ENCODE measurements at regions of chr2 and their contacts with region 1.

Region 1: DNA sequence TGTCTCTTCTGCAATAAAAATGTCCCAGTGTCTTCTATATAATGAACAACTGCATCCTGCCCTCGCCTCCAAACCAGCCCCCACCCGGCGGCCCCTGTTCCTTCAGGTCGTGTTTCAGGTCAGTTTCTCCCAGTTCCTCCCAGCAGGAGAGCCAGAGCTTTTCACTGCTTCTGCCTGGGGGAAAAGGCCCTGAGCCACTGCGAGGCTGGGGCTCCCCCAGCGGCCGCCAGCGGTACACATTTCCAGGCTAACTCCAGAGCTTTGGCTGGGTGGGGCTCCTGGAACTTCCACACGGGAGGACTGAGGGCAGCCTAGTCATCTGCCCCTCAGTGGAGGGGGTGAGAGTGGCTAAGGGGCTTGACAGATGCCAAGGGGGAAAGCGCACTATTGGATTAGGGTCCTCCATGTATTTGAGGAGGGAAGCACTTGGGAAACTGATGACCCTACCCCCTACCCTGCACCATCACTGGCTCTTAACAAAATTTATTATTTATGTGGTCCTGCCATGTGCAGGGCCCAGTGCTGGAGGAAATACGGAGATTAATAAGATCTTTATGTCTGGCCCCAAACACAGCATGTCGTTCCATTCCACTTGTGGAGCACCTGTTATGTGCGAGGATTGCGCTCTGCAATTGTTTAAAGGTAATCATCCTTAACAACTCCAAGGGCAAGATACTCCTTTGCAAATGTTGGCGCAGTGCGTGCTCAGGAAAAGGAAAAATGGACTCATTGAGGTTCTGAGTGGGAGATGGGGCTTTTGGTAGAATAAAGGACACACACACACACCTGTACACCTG is 17.3 kb upstream of the CYS1 start:
- DNase-seq: peak in 1 of 2 experiments; percentile 84
- H3K4me3 ChIP-seq: no peak overlapping the region
- H3K27ac ChIP-seq: no peak overlapping the region
- H3K4me1 ChIP-seq: peaks cover 0 to 4% (median 1%) of the 10 kb centered on the region in 4 experiments; a peak in 2 of 7 replicates
- H3K27me3 ChIP-seq: no peaks in the 10 kb centered on the region
- CTCF ChIP-seq: peak; percentile 82 to 96 (median 92)
- EP300 ChIP-seq: no peak; a peak in 1 of 3 replicates
- POLR2A ChIP-seq: no peak
- RAD21 ChIP-seq: peak; percentile 83 to 87

Region 2: GRCh38 chr2:9555297-9556141 is 542.0 kb before region 1 on chr2 and contains the start of gene ADAM17:
- CTCF ChIA-PET with region 1: no interaction called
- POLR2A ChIA-PET with region 1: no interaction called
- DNase-seq: peak; percentile 82 to 91
- H3K4me3 ChIP-seq: peak within 1 kb of the TSS; percentile 74 to 92 (median 86)
- H3K27ac ChIP-seq: peak within 1 kb of the TSS; percentile 87
- H3K4me1 ChIP-seq: peaks cover 0 to 3% (median 0%) of the 10 kb centered on the region in 4 experiments; a peak in 1 of 7 replicates
- H3K27me3 ChIP-seq: no peaks in the 10 kb centered on the region
- CTCF ChIP-seq: peak; percentile 33 to 51 (median 40); a peak in 3 of 4 replicates
- EP300 ChIP-seq: no peak
- POLR2A ChIP-seq: peak in 1 of 2 experiments; percentile 87; a peak in 2 of 3 replicates
- RAD21 ChIP-seq: peak; percentile 4 to 13; a peak in 3 of 4 replicates
- total RNA-seq, gene ADAM17: 23.5 and 25.1 TPM in 2 replicates

Region 3: GRCh38 chr2:10057231-10058107 is 40.1 kb before region 1 on chr2:
- CTCF ChIA-PET with region 1: interaction called, 429 read pairs
- POLR2A ChIA-PET with region 1: no interaction called
- DNase-seq: peak; percentile 80 to 85
- H3K4me3 ChIP-seq: peak overlapping the region; percentile 28 to 56 (median 40); a peak in 7 of 8 replicates
- H3K27ac ChIP-seq: no peak overlapping the region
- H3K4me1 ChIP-seq: peaks cover 0 to 16% (median 2%) of the 10 kb centered on the region in 4 experiments; a peak in 3 of 7 replicates
- H3K27me3 ChIP-seq: no peaks in the 10 kb centered on the region
- CTCF ChIP-seq: no peak
- EP300 ChIP-seq: no peak
- POLR2A ChIP-seq: peak in 1 of 2 experiments; percentile 42; a peak in 1 of 3 replicates
- RAD21 ChIP-seq: no peak; a peak in 1 of 4 replicates

Region 4: GRCh38 chr2:10072656-10073480 is 24.7 kb before region 1 on chr2:
- CTCF ChIA-PET with region 1: interaction called, 429 read pairs
- POLR2A ChIA-PET with region 1: interaction called, 4 read pairs
- DNase-seq: peak; percentile 43 to 82
- H3K4me3 ChIP-seq: no peak overlapping the region
- H3K27ac ChIP-seq: no peak overlapping the region
- H3K4me1 ChIP-seq: peaks cover 0 to 12% (median 7%) of the 10 kb centered on the region in 4 experiments; a peak in 2 of 7 replicates
- H3K27me3 ChIP-seq: peaks cover 0 to under 1% (median 0%) of the 10 kb centered on the region in 4 experiments; a peak in 1 of 7 replicates
- CTCF ChIP-seq: peak; percentile 84 to 90 (median 89)
- EP300 ChIP-seq: no peak
- POLR2A ChIP-seq: no peak
- RAD21 ChIP-seq: peak; percentile 76 to 82

Region 5: DNA sequence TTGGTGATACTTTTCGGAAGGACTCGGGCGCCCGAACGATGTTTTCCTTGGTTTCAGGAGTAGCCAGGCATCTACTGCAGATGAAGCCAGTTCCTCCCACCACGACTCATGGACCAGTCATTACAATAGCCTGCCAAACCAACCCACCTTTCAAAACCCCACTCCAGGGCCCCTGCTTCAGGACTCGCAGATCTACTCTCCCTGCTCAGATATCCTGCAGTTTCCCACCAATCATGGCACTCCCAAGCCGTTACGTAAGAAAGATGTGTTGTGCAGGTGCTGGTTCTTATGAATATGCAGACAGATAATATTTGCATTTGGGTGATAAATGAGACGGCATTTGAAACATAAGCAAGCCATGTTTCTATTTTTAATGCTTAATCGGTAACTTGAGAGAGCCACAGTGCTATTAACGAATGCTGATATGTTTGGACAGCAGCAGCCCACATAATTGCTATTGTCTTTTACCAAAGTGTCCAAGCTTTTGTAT is 13.8 kb before region 1 on chr2:
- CTCF ChIA-PET with region 1: interaction called, 429 read pairs
- POLR2A ChIA-PET with region 1: interaction called, 5 read pairs
- DNase-seq: no peak
- H3K4me3 ChIP-seq: no peak overlapping the region
- H3K27ac ChIP-seq: no peak overlapping the region
- H3K4me1 ChIP-seq: peaks cover 0 to 6% (median 2%) of the 10 kb centered on the region in 4 experiments; a peak in 2 of 7 replicates
- H3K27me3 ChIP-seq: peaks cover 8 to 24% (median 16%) of the 10 kb centered on the region in 4 experiments
- CTCF ChIP-seq: no peak
- EP300 ChIP-seq: no peak
- POLR2A ChIP-seq: no peak
- RAD21 ChIP-seq: no peak

Region 6: DNA sequence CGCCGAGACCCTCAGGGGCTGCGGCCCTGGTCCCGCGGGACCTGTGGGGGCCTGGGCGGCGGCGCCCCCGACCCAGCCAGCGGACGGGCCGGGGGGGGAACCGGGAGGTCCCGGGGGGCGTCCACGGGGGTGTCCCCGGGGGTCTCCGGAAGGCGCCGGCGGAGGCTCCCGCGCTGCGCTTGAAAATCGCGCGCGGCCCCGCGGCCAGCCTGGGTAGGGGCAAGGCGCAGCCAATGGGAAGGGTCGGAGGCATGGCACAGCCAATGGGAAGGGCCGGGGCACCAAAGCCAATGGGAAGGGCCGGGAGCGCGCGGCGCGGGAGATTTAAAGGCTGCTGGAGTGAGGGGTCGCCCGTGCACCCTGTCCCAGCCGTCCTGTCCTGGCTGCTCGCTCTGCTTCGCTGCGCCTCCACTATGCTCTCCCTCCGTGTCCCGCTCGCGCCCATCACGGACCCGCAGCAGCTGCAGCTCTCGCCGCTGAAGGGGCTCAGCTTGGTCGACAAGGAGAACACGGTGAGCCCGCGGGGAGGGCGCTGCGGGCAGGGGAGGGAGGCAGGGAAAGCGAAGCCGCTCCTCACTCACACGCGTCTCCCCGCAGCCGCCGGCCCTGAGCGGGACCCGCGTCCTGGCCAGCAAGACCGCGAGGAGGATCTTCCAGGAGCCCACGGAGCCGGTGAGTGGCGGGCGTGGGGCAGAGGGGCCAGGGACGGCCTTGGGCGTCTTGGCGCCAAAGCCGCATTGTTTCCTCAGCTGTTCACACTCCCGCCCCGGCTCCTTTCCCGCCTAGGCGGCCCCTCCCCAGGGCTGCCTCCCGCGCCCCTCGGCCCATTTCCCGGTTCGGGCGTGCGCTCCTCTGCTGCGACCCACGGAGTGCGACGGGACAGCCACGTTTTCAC is 25.1 kb after region 1 on chr2 and contains the start of gene RRM2:
- CTCF ChIA-PET with region 1: interaction called, 5 read pairs
- POLR2A ChIA-PET with region 1: interaction called, 14 read pairs
- DNase-seq: peak; percentile 71 to 96
- H3K4me3 ChIP-seq: peak within 1 kb of the TSS; percentile 85 to 96 (median 88)
- H3K27ac ChIP-seq: peak within 1 kb of the TSS; percentile 85
- H3K4me1 ChIP-seq: peaks cover 1 to 4% (median 4%) of the 10 kb centered on the region in 4 experiments; a peak in 5 of 7 replicates
- H3K27me3 ChIP-seq: no peaks in the 10 kb centered on the region
- CTCF ChIP-seq: no peak
- EP300 ChIP-seq: no peak
- POLR2A ChIP-seq: peak; percentile 97 to 98
- RAD21 ChIP-seq: no peak
- total RNA-seq, gene RRM2: 215 and 228 TPM in 2 replicates

Region 7: DNA sequence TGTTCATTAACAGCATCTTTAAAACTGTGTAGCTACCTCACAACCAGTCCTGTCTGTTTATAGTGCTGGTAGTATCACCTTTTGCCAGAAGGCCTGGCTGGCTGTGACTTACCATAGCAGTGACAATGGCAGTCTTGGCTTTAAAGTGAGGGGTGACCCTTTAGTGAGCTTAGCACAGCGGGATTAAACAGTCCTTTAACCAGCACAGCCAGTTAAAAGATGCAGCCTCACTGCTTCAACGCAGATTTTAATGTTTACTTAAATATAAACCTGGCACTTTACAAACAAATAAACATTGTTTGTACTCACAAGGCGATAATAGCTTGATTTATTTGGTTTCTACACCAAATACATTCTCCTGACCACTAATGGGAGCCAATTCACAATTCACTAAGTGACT is 31.9 kb after region 1 on chr2:
- CTCF ChIA-PET with region 1: interaction called, 10 read pairs
- POLR2A ChIA-PET with region 1: interaction called, 14 read pairs
- DNase-seq: no peak
- H3K4me3 ChIP-seq: no peak overlapping the region
- H3K27ac ChIP-seq: no peak overlapping the region
- H3K4me1 ChIP-seq: peaks cover 2 to 20% (median 6%) of the 10 kb centered on the region in 4 experiments; a peak in 5 of 7 replicates
- H3K27me3 ChIP-seq: no peaks in the 10 kb centered on the region
- CTCF ChIP-seq: no peak
- EP300 ChIP-seq: no peak
- POLR2A ChIP-seq: peak in 1 of 2 experiments; percentile 30; a peak in 1 of 3 replicates
- RAD21 ChIP-seq: no peak

Measured in H1 (cell line).